AG04449 (cell line): ENCODE measurements at regions of chr12 and their contacts with region 1.

Region 1: DNA sequence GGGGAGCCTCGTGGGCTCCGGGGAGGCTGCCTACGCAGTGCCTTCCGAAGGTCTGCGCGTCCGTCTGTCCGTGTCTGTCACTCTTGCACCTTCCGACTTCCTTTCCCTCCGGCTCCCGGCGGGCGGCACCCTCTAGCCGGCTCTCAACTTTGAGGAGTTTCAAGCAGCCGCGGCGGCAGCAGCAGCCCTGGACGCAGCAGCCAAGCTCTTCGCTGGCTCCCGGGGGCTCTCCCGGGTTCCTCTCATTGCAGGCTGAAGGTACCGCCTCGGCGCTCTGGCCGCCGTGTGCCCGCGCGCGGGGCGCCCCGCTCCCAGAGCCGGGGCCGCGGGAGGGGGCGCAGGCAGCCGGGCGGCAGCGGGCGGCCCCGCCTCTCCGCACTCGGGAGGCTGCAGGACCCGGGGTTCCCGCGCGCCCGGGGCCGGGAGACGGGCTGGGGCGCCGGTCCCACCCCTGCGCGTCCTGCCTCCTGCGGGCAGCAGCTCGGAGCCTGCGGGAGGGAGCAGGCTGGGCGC is at the starts of genes AMIGO2 and PCED1B:
- DNase-seq: no peak
- H3K4me3 ChIP-seq: peak within 1 kb of the TSS; percentile 85
- CTCF ChIP-seq: peak; percentile 50

Region 2: GRCh38 chr12:47095446-47096236 is 16.1 kb after region 1 on chr12:
- CTCF ChIA-PET with region 1: no interaction called
- POLR2A ChIA-PET with region 1: interaction called, 17 read pairs
- DNase-seq: peak; percentile 73
- H3K4me3 ChIP-seq: no peak overlapping the region
- CTCF ChIP-seq: no peak

Region 3: GRCh38 chr12:47272412-47273190 is 193.1 kb after region 1 on chr12:
- CTCF ChIA-PET with region 1: no interaction called
- POLR2A ChIA-PET with region 1: interaction called, 11 read pairs
- DNase-seq: no peak
- H3K4me3 ChIP-seq: no peak overlapping the region
- CTCF ChIP-seq: no peak

Region 4: DNA sequence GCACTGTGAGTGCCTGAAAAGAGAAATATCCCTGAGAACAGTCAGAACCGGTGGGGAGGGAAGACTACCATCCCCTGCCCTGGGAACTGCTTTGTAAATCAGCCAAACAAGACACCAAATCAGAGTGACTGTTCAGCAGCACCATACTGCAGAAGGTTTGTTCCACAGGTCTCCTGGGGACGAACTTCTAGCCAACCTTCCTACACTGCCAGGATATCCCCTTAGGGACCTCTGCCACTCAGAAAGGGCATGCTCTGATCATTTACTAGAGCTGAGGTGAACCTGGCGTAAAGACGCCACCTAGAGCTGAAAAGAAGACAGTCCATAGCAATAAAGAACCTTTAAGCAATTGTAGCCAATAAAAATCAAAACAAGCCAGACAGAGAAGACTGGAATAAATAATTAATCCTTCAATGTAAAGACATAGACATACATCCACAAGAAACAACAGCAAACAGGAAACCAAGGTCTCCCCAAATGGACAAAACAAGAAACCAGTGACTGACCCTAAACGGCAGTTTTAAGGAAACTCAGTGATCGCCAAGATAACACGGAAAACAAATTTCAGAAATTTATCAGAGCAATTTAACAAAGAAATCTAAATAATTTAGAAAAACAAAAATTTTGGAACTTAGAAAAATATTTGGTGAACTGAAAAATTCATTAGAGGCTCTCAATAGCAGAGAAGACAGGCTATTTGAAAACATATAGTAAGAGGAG is 228.3 kb after region 1 on chr12:
- CTCF ChIA-PET with region 1: interaction called, 10 read pairs
- POLR2A ChIA-PET with region 1: interaction called, 5 read pairs
- DNase-seq: no peak
- H3K4me3 ChIP-seq: no peak overlapping the region
- CTCF ChIP-seq: peak; percentile 54

Region 5: DNA sequence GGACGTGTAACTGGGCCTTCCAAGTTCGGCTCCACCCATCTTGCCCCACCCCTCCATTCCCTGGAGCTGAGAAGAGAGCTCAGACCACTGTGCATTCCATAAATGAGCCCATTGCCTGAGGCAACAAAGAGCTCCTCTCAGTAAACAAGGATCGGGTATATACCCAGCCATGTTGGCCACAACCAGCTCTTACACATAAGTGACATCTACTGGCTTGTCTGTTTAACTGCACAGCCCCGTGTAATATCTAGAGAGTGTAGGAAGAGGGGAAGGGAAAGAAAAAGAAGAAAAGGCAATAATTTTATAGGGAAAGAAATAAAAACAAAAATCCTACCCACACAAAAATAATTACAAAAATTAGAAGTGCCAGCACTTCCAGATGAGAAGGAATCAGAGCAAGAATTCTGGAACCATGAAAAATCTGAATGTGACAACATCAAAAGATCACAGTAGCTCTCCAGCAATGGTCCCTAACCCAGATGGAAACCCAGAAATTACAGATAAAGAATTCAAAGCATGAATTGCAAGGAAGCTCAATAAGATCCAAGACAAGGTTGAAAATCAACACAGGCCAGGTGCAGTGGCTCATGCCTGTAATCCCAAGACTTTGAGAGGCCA is 318.2 kb after region 1 on chr12:
- CTCF ChIA-PET with region 1: interaction called, 10 read pairs
- POLR2A ChIA-PET with region 1: interaction called, 3 read pairs
- DNase-seq: no peak
- H3K4me3 ChIP-seq: no peak overlapping the region
- CTCF ChIP-seq: peak; percentile 45